ENCODE measurements at regions of chr1 and their contacts with region 1.

Region 1: DNA sequence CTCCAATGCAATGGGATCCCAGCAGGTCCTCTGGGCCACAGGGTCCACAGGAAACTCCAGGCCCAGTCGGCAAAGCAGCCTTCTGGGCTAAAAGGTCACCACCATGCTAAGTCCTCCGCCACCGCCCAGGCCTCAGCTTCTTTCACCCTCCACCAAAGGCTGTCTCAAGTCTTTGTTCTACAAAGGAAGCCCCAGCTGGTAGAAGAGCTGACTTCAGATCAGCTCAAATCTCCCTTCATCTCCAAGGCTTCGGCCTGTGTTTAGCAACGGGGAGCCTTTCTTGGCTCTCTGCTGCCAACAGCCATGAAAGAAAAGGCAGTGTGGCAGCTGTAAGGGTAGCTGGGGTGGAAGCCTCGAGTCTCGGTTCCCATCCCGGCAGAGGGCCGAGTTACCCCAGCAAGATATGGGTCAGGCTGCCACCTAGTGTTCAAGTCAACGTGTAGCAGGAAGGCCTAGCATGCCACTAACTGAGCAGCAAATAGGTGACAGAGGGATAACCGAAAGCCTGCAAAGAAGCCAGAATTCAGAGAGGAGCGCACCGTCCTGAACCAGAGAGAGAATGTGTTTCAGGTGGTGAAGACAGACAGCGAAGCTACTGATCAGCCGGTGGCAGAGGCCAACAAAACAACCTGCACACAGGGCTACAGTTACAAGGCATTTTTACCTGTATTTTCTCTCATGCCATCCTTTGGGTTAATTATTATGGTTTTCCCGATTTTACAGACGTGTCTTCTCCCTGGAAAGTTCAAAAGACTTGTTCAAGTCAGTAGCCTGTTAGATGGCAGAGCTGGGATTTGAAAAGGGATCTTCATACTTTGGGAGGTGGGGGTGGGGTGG is 26.8 kb upstream of the CRNN start:
- DNase-seq: peak; percentile 9 to 72 (median 54)
- H3K4me3 ChIP-seq: no peak overlapping the region
- H3K27ac ChIP-seq: no peak overlapping the region
- H3K27me3 ChIP-seq: peaks cover 0 to 25% (median 2%) of the 10 kb centered on the region in 45 donors
- CTCF ChIP-seq: peak in 55 of 56 donors; percentile 42 to 89 (median 80)

Region 2: GRCh38 chr1:152052606-152053005 is 388.2 kb before region 1 on chr1:
- intact Hi-C with region 1: loop called in 1 of 2 experiments (anchors 5 kb)
- DNase-seq: peak; percentile 65 to 89 (median 83)
- H3K4me3 ChIP-seq: no peak overlapping the region
- H3K27ac ChIP-seq: no peak overlapping the region
- H3K27me3 ChIP-seq: peaks cover 0 to 34% (median 0%) of the 10 kb centered on the region in 45 donors
- CTCF ChIP-seq: peak; percentile 83 to 97 (median 92)

Region 3: DNA sequence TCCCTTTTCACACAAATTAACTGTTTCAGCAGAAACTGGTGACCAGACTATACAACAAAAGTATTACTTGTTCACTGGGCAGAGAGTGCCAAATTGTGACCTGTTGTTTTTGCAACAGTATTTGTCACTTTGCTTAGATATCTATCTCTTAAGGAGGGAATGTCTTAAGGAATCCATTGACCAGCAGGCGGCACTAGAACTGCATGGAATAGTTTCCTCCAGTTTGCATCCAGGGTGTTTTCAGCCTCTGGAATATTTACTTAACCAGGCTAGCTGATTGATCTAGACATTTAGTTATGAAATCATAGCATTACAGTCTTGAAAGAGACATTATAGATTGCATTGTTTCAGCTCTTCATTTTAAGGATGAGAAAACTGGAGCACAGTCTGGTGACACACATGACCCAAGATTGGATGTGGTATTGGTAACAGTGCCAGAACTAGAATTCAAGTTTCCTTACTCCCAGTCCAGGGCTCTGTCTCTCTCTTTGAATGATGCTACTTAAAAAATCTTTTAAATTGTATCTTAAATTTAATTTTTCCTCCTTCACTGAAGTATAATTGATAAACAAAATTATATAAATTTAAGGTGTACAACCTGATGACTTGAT is 298.8 kb before region 1 on chr1:
- intact Hi-C with region 1: loop called in 1 of 2 experiments (anchors 5 kb)
- DNase-seq: peak in 4 of 10 donors; percentile 4 to 61 (median 42)
- H3K4me3 ChIP-seq: no peak overlapping the region
- H3K27ac ChIP-seq: no peak overlapping the region
- H3K27me3 ChIP-seq: peaks cover 0 to 14% (median 0%) of the 10 kb centered on the region in 45 donors
- CTCF ChIP-seq: peak; percentile 55 to 91 (median 71)

Region 4: GRCh38 chr1:152153996-152154395 is 286.9 kb before region 1 on chr1:
- intact Hi-C with region 1: no loop called
- DNase-seq: no peak
- H3K4me3 ChIP-seq: no peak overlapping the region
- H3K27ac ChIP-seq: no peak overlapping the region
- H3K27me3 ChIP-seq: peaks cover 0 to 3% (median 0%) of the 10 kb centered on the region in 45 donors
- CTCF ChIP-seq: no peak

Region 5: GRCh38 chr1:152189657-152190442 is 251.0 kb before region 1 on chr1:
- intact Hi-C with region 1: loop called (anchors 5 kb)
- DNase-seq: peak in 9 of 10 donors; percentile 8 to 68 (median 51)
- H3K4me3 ChIP-seq: peak overlapping the region in 51 of 59 donors; percentile 34 to 72 (median 59)
- H3K27ac ChIP-seq: no peak overlapping the region
- H3K27me3 ChIP-seq: peaks cover 0 to 16% (median 0%) of the 10 kb centered on the region in 45 donors
- CTCF ChIP-seq: peak; percentile 55 to 82 (median 73)